ENCODE measurements at regions of chr13 and their contacts with region 1.

Region 1: GRCh38 chr13:52194184-52194868 is 34.9 kb upstream of the NEK3 start:
- DNase-seq: peak; percentile 78 to 95 (median 90)

Region 2: DNA sequence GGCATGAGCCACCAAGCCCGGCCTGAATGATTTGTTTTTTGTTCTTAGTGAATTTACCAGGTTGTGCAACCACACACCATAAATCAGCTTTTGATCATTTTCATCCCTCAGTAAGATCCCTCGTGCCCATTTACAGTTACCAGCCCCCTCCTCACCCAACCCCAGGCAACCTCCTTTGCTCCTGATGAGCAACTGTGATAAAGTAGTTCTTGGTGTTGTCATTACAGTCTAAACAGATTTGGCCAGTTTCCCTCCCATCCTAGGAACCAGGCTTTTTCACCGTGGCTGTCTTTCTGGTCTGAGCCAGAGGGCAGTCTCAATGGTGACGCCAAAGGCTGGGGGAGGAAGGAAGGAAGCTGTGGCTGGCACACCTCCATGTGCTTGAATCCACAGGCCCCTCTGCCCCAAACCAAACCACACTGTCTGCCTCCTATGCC is 671.2 kb before region 1 on chr13:
- intact Hi-C with region 1: no loop called
- DNase-seq: peak in 16 of 42 donors; percentile 4 to 47 (median 14)

Region 3: GRCh38 chr13:52011632-52012511 is 182.5 kb before region 1 on chr13 and contains the start of gene ALG11:
- intact Hi-C with region 1: loop called (anchors 5 kb)
- DNase-seq: peak; percentile 98 to 100 (median 99)

Region 4: GRCh38 chr13:52085421-52085820 is 108.9 kb before region 1 on chr13:
- intact Hi-C with region 1: no loop called
- DNase-seq: no peak

Measured in head of caudate nucleus (tissue), 42 donors.